Left colon (tissue), 2 donors: ENCODE measurements at regions of chr9 and their contacts with region 1.

Region 1: DNA sequence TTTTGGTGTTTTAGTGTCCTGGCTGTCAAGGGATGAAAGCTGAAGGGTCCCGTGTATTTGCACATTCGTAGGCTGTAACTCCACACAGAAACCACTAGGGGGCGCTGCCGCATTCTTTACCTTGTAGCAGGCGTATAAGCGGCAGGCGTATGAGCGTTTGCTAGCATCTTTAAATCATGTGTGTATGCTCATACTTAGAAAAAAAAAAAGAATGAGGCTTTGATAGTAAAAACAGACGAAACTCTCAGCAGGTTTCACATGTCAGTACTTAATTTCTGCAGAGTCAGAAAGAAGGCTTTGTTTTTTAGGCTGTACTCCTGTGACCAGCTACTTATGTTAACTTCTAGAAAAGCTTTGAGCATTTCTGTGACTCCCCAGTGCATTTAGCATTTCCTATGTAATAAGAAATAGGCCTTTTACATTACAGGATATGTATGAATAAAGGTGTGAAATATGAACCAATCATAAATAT is 218.8 kb upstream of the ADAMTSL1 start:
- DNase-seq: peak; percentile 57 to 64
- ATAC-seq: peak; percentile 84

Region 2: DNA sequence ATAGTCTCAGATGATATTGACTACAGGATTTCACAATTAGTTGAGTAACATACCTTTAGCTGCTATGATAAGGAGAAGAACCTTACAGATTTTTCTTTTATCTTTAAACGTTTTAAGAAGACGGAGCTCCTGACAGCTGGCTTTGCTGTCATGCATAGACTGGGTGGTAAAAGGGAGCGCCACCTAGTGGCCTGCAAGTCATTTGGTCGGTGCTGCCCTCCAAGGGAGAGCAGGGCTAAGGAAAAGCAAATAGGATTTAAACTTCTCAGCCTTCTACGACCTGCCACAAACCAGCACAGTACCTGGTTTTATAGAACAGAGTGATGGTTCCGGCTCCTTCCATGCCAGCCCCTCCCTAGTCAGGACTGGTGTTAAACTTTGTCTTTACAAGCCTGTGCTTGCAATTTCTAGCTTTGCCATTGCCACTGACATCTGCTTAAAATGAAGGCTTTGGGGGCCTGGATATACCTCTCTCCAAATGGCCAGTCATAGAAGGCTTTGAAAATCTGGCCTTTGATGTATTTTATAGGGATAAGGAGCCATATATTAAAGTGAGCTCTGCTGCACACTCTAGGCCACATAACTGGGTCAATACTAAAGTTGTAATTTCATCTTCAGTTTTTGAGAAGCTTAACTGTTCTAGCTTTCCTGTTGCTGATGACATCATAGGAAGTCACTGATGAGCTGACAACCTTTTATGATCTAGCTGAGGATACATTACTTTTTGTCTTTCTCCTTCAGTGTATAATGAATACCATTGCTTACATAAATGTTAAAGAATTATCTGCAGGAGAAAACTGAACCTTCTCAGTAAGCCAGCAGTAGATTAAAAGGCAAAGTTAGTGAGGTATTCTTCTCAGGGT is 187.7 kb after region 1 on chr9:
- intact Hi-C with region 1: loop called in 1 of 2 experiments (anchors 5 kb)
- DNase-seq: peak; percentile 69 to 74
- ATAC-seq: peak; percentile 97

Region 3: GRCh38 chr9:19028835-19029451 is 773.7 kb after region 1 on chr9:
- intact Hi-C with region 1: loop called (anchors 5 to 10 kb)
- DNase-seq: peak in 1 of 2 donors; percentile 19
- ATAC-seq: peak; percentile 78